Vagina (tissue), 2 donors: ENCODE measurements at regions of chr10 and their contacts with region 1.

Region 1: GRCh38 chr10:80896529-80896928 is 358.8 kb downstream of the SH2D4B start:
- DNase-seq: no peak
- H3K4me3 ChIP-seq: no peak overlapping the region
- H3K27ac ChIP-seq: no peak overlapping the region
- H3K4me1 ChIP-seq: no peaks in the 10 kb centered on the region
- H3K27me3 ChIP-seq: no peaks in the 10 kb centered on the region
- CTCF ChIP-seq: no peak
- POLR2A ChIP-seq: no peak

Region 2: GRCh38 chr10:80855348-80855971 is 41.1 kb before region 1 on chr10:
- intact Hi-C with region 1: loop called (anchors 1 kb)
- DNase-seq: no peak
- H3K4me3 ChIP-seq: no peak overlapping the region
- H3K27ac ChIP-seq: no peak overlapping the region
- H3K4me1 ChIP-seq: no peaks in the 10 kb centered on the region
- H3K27me3 ChIP-seq: no peaks in the 10 kb centered on the region
- CTCF ChIP-seq: no peak
- POLR2A ChIP-seq: no peak

Region 3: DNA sequence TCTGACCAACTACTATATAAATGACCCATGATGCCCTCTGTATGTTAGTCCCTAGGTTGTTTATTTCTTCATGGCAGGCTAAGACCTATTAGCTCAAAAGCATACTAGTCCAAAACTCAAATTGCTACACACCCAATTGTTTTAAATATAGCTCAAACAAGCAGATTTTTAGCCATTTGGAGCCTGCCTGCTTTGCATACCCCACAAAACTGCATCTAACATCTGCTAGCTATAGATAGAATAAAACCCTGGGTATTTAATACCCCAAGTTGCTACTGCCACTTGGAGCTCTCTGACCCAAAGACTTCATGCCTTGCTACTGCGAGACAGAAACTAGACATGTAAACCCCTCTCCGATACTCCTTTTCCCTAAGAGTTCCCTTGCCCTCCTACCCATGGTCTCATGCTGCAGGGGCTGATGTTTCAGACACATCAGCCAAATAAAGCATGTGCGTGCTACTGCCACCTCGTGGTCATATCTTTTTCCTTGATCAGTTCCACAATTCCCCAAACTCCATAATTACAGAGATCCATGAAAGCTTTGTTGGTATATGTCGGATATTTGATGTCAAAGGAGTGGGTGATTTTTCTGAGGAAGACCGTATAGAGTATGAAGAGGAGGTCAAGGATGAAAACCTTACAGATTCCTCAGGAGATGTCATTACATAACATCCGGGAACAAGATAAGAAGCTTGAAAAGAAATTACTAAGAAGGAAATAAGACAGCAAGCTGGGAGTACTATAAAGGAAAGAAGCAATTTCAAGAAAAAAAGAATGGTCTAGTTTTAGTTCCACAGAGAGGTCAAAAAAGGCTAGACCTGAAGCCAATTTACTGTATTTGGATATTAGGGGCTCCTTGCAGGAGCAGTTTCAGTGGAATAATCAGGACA is 27.8 kb after region 1 on chr10:
- intact Hi-C with region 1: no loop called
- DNase-seq: no peak
- H3K4me3 ChIP-seq: no peak overlapping the region
- H3K27ac ChIP-seq: no peak overlapping the region
- H3K4me1 ChIP-seq: no peaks in the 10 kb centered on the region
- H3K27me3 ChIP-seq: no peaks in the 10 kb centered on the region
- CTCF ChIP-seq: peak; percentile 8 to 51 (median 51)
- POLR2A ChIP-seq: no peak